Panc1 (cell line): ENCODE measurements at regions of chr7 and their contacts with region 1.

Region 1: GRCh38 chr7:21767300-21767900 is 178.3 kb downstream of the CDCA7L start:
- DNase-seq: peak; percentile 75
- ATAC-seq: peak; percentile 99
- H3K4me3 ChIP-seq: no peak overlapping the region
- H3K27ac ChIP-seq: no peak overlapping the region
- H3K4me1 ChIP-seq: no peaks in the 10 kb centered on the region
- H3K27me3 ChIP-seq: peaks cover 7% of the 10 kb centered on the region
- CTCF ChIP-seq: peak; percentile 93

Region 2: GRCh38 chr7:22001345-22002004 is 234.1 kb after region 1 on chr7:
- CTCF ChIA-PET with region 1: no interaction called
- POLR2A ChIA-PET with region 1: no interaction called
- in situ Hi-C with region 1: no loop called
- intact Hi-C with region 1: loop called (anchors 5 kb)
- DNase-seq: peak; percentile 35
- ATAC-seq: peak; percentile 80
- H3K4me3 ChIP-seq: no peak overlapping the region; a peak in 1 of 4 replicates
- H3K27ac ChIP-seq: no peak overlapping the region
- H3K4me1 ChIP-seq: no peaks in the 10 kb centered on the region
- H3K27me3 ChIP-seq: peaks cover 17% of the 10 kb centered on the region
- CTCF ChIP-seq: peak; percentile 81; the same call in 1 of the 2 replicates